Aorta (tissue), 5 donors: ENCODE measurements at regions of chr12 and their contacts with region 1.

Region 1: DNA sequence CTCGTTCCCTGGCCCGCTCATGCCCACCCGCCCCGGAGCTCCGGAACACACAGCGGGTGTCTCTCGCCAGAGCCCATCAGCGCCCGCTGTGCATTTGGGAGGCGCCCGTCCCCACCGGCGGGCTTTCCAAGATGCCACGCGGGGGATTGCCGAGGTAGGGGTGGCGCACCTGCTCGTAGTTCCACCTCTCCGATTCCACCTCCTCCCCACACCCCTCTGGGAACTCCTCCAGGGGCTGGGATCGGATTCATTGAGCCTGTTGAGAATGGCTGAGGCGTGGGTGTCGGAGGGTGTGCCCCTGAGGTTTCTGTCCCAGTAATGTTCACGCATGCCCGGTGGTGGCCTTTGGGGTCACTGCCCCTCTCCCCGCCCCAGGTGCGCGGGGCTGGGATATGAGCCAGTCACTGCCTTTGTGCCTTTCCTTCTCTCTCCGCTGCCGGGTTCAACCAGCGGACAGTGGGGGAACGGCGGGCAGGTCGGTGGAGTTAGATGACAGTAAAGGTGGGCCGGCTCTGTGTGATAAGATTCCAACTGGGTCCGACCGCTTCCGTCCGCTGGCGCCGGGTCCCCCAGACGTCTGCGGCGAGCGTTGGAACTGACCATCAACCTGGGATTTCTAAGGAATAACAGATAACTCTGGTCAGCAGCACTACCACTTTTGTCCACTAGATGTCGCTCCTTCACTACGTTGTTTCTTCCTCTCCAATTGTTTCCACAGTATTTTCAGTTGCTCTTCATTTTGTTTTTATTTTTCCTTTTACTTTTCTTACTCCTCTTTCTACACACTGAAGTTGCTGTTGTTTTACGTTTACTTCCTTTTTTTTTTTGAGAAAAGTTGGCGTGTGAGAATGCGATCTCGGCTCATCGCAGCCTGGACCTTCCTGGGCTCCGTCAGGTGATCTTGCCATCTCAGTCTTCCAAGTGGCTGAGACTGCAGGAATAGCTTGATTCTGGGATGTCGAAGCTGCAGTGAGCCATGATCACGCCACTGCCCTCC is 178.1 kb upstream of the ALG10B start:
- DNase-seq: peak in 1 of 2 donors; percentile 77
- ATAC-seq: peak; percentile 83
- H3K4me3 ChIP-seq: peak overlapping the region; percentile 31 to 36
- H3K27ac ChIP-seq: no peak overlapping the region
- H3K4me1 ChIP-seq: no peaks in the 10 kb centered on the region
- H3K27me3 ChIP-seq: no peaks in the 10 kb centered on the region

Region 2: DNA sequence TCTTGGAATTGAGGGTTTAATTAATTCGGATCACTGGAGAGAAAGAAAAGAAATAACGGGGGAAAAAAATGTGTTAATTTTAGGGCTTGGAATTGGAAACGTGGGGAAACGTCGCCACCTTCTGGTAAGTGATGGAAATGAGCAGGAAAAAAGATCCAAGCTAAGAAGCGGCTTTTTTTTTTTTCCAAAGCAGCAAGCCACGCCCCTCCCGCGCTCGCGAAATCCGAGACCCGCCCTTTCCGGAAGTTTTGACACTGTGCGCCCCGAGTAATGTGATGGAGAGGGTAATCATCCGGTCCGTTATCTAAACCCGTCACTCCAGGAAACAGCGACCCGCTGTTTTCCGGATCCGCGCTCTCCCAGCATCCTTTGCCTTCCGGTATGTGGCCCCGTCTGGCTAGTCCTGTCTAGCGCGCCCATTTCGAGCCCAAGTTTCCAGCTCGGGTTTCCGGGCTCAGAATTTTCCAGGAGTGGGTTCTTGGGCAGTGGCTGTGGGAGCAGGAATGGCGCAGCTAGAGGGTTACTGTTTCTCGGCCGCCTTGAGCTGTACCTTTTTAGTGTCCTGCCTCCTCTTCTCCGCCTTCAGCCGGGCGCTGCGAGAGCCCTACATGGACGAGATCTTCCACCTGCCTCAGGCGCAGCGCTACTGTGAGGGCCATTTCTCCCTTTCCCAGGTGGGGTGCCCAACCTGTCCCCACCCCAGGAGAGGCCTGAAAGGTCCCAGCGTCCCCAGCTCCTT is 178.0 kb after region 1 on chr12 and contains the start of gene ALG10B:
- intact Hi-C with region 1: loop called (anchors 5 kb)
- DNase-seq: peak; percentile 95
- ATAC-seq: peak; percentile 100
- H3K4me3 ChIP-seq: peak within 1 kb of the TSS; percentile 31 to 44
- H3K27ac ChIP-seq: peak within 1 kb of the TSS; percentile 31 to 74
- H3K4me1 ChIP-seq: no peaks in the 10 kb centered on the region
- H3K27me3 ChIP-seq: no peaks in the 10 kb centered on the region
- total RNA-seq, gene ALG10B: 5.3 to 7.8 TPM